PC-3 (cell line): ENCODE measurements at regions of chr4 and their contacts with region 1.

Region 1: DNA sequence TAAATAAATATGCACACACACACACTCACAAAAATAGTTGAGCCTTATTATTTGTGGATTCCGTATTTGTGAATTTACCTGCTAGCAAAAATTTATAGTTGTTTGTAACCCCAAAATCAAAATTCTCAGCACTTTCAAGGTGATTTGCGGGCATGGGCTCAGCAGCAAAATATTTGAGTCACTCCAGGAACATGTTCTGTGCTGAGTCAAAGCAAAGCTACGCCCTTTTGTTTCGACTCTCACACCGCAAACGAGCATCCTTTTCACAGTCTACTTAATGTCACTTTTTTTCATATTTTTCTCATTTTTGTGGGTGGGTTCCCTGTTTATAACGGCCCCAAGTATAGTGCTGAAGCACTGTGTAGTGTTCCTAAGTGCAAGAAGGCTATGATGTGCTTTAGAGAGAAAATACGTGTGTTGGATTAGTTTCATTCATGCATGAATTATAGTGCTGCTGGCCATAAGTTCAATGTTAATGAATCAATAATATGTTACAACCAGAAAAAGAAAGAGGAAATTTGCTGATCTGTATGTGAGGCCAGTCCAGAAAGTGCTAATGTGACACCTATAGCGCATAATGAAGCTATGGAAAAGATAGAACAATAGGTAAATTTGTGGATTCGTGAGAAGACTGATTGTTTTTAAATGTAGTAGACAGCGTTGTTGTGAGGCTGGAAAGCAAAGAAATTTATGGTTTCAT is 723.2 kb upstream of the AGA start:
- DNase-seq: peak; percentile 67
- ATAC-seq: peak; percentile 94
- H3K4me3 ChIP-seq: peak overlapping the region; percentile 50
- H3K27ac ChIP-seq: no peak overlapping the region
- H3K4me1 ChIP-seq: peaks cover 26% of the 10 kb centered on the region
- H3K27me3 ChIP-seq: no peaks in the 10 kb centered on the region
- CTCF ChIP-seq: no peak

Region 2: GRCh38 chr4:177673985-177674489 is 491.4 kb before region 1 on chr4:
- CTCF ChIA-PET with region 1: no interaction called
- POLR2A ChIA-PET with region 1: no interaction called
- intact Hi-C with region 1: loop called (anchors 10 kb)
- DNase-seq: no peak
- ATAC-seq: no peak
- H3K4me3 ChIP-seq: no peak overlapping the region
- H3K27ac ChIP-seq: no peak overlapping the region
- H3K4me1 ChIP-seq: no peaks in the 10 kb centered on the region
- H3K27me3 ChIP-seq: no peaks in the 10 kb centered on the region
- CTCF ChIP-seq: no peak